ENCODE measurements at regions of chr13 and their contacts with region 1.

Region 1: GRCh38 chr13:31742097-31742734 is 2.9 kb downstream of the RXFP2 start:
- DNase-seq: no peak
- H3K4me3 ChIP-seq: no peak overlapping the region
- H3K27me3 ChIP-seq: no peaks in the 10 kb centered on the region
- CTCF ChIP-seq: peak; percentile 97

Region 2: DNA sequence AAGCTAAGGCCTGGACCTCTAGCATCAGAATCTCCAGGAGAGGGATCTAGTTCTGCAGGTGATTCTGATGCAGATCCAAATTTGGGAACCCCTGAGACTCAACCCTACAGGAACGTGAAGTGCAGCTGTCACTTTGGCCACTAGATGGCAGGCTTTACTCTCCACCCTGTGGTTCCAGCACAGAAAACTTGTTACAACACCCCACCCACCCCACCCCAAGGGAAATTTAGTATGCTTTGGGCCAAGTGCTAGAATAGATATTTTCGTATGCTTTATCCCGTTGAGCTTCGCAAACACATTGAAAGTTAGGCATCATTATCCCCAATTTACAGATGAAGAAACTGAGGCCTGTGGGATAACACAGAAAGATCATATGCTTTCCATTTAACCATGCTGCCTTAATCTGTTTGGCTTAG is 310.5 kb before region 1 on chr13:
- CTCF ChIA-PET with region 1: interaction called, 21 read pairs
- POLR2A ChIA-PET with region 1: interaction called, 5 read pairs
- DNase-seq: no peak
- H3K4me3 ChIP-seq: no peak overlapping the region
- H3K27me3 ChIP-seq: no peaks in the 10 kb centered on the region
- CTCF ChIP-seq: peak; percentile 83

Region 3: DNA sequence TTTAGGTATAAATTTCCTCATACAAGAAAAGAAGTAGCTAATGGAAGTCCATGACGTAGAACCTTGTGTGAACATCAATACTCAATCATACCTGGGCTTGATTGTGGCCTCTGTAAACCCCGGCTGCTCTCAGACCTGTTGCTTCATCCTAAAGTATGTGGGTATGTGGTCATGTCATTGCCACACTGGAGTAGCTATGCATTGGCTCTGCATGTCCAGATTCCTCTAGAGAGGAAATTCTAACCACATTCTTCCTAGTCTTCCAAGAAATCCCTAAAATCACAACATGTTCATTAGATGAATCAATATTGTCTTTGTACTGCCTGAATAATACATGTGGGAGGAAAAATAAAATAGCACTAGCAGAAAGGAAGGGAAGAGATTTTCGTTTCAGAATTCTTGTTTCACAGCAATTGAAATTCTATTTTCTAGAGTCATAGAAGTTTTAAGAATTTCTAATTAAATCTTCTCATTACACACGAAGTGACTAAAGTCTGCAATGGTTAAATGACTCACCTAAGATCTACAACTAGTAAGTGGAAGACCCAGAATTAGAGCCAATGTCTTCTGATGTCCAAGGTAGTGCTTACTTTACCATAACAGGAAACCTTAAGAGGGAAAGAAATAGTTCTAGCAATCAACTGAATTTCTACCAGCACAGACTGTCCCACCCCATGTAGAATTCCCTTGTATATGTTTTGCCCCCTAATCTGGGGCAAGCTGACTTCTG is 25.1 kb after region 1 on chr13:
- CTCF ChIA-PET with region 1: no interaction called
- POLR2A ChIA-PET with region 1: interaction called, 14 read pairs
- DNase-seq: no peak
- H3K4me3 ChIP-seq: no peak overlapping the region
- H3K27me3 ChIP-seq: no peaks in the 10 kb centered on the region
- CTCF ChIP-seq: no peak